Activated naive CD4-positive, alpha-beta T cell treated with anti-CD3 and anti-CD28 coated beads for 36 hours (primary cell): ENCODE measurements at regions of chr3 and their contacts with region 1.

Region 1: GRCh38 chr3:15241341-15241740 is 35.3 kb downstream of the CAPN7 start:
- DNase-seq: peak; percentile 69
- H3K4me3 Mint-ChIP-seq: no peak overlapping the region
- H3K27ac Mint-ChIP-seq: no peak overlapping the region
- H3K4me1 Mint-ChIP-seq: peaks cover 3% of the 10 kb centered on the region
- H3K27me3 Mint-ChIP-seq: no peaks in the 10 kb centered on the region

Region 2: GRCh38 chr3:15405448-15406050 is 164.2 kb after region 1 on chr3:
- CTCF ChIA-PET with region 1: interaction called, 11 read pairs
- intact Hi-C with region 1: no loop called
- DNase-seq: peak; percentile 10
- H3K4me3 Mint-ChIP-seq: no peak overlapping the region
- H3K27ac Mint-ChIP-seq: no peak overlapping the region
- H3K4me1 Mint-ChIP-seq: peaks cover 1% of the 10 kb centered on the region
- H3K27me3 Mint-ChIP-seq: no peaks in the 10 kb centered on the region